T-cell (primary cell): ENCODE measurements at regions of chr7 and their contacts with region 1.

Region 1: DNA sequence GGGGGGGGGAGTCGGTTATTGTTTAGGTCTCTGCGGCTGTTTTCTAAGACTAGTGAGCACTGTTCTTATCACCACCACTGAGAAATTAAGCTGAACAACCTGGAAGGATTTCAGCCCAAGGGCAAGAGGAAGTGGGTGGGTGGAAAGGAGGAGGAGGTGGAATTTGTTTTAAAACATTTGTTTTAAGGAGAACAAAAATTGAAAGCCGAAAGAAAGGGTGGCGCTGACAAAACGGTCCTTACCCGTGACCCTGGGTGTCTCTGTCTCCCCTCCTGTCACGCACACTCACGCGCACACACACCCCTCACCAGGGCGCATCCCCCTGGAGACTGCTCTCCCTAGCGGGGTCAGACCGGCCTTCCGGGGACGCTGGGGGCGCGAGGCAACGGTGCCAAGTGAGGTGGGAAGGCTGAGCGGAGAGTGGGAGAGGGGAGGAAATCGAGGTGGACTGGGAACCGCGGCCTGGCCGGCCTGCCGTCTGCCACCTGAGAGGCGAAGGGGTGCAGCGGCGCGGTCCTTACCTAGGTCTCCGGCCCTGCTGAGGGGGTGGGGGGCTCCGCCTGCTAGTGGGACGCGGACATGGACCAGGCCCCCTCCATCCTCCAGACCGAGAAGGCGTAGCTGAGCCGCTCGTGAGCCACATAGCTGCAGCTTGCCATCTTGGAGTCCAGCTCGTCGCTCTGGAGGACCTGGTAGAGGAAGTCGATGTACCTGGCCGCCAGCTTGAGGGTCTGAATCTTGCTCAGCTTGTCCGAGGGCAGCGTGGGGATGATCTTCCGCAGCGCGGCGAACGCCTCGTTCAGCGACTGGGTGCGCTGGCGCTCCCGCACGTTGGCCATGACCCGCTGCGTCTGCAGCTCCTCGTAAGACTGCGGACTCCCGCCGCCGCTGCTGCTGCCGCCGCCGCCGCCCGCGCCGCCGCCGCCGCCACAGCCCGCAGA is 1.0 kb downstream of the TWIST1 start:
- DNase-seq: no peak
- ATAC-seq: no peak
- H3K4me3 ChIP-seq: no peak overlapping the region
- H3K4me3 Mint-ChIP-seq: peak overlapping the region; percentile 9 to 50 (median 14)
- H3K27ac ChIP-seq: no peak overlapping the region
- H3K27ac Mint-ChIP-seq: peak overlapping the region in 1 of 2 donors; percentile 23
- H3K4me1 ChIP-seq: peaks cover 0 to 15% of the 10 kb centered on the region in 2 experiments
- H3K4me1 Mint-ChIP-seq: peaks cover 0 to 3% (median 0%) of the 10 kb centered on the region in 3 donors
- H3K27me3 ChIP-seq: peaks cover 13 to 37% of the 10 kb centered on the region in 2 experiments
- H3K27me3 Mint-ChIP-seq: peaks cover 54 to 62% of the 10 kb centered on the region in 2 donors

Region 2: DNA sequence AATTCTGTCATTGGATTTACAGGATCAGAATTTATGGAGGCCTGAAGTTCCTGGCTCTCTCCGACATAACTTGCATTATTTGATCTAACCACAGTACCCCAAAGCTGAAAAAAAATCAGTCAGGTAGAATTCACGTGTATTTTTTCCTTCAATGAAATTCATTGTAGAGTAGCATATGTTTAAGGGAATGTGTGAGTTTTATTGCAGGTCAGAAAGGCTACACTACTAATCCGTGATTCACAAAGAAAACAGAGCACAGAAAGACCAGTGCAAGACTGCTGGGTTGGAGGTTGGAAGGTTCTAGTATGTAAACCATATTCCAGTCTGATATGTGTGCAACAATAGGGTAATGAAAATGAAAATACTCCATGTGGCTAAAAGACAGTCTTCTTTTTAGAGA is 275.8 kb after region 1 on chr7:
- CTCF ChIA-PET with region 1: no interaction called
- POLR2A ChIA-PET with region 1: interaction called in 1 of 2 experiments, 10 read pairs
- DNase-seq: no peak
- ATAC-seq: no peak
- H3K4me3 ChIP-seq: no peak overlapping the region
- H3K4me3 Mint-ChIP-seq: no peak overlapping the region
- H3K27ac ChIP-seq: no peak overlapping the region
- H3K27ac Mint-ChIP-seq: no peak overlapping the region
- H3K4me1 ChIP-seq: no peaks in the 10 kb centered on the region
- H3K4me1 Mint-ChIP-seq: no peaks in the 10 kb centered on the region
- H3K27me3 ChIP-seq: no peaks in the 10 kb centered on the region
- H3K27me3 Mint-ChIP-seq: no peaks in the 10 kb centered on the region